ENCODE measurements at regions of chr4 and their contacts with region 1.

Region 1: DNA sequence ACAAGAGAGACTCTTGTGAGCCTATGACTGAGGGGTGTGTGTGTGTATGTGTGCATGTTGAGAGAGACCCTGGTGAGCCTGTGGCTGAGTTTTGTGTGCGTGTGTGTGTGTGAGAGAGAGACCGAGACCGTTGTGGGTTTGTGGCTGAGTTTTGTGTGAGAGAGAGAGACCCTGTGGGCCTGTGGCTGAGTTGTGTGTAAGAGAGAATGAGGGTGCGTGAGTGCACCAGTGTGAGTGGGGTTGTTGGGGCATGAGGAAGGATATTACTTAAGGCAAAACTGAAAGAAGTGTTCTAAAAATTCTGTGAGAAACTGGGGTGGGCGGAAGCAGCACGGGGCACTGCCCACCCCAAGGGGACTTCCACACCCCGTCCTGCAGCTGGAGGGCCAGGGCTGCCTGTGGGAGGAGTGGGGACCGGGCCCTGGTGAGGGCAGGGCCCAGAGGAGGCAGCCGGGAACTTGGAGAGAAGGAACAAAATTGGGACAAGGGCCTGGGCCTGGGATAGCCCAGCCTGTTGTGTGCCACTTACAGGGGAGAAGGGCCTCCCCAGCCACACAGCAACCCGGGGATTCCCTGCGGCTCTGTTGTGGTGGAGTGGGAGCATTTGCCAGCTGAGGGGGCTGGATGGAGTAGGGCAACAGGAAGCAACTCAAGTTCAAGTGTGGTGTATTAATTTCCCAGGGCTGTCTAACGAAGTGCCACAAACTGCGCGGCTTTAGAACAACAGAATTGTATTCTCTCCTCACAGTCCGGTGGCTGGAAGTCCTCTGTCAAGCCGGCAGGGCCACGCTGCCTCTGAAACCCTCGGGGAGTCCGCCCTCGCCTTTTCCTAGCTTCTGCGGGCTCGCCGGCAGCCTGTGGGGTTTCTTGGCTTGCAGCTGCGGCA is 22.1 kb downstream of the TMEM131L start:
- DNase-seq: peak in 1 of 2 donors; percentile 70
- H3K4me3 ChIP-seq: peak overlapping the region; percentile 14 to 47
- H3K27ac ChIP-seq: peak overlapping the region; percentile 88 to 90
- H3K4me1 ChIP-seq: peaks cover 21 to 34% of the 10 kb centered on the region in 2 donors
- H3K27me3 ChIP-seq: no peaks in the 10 kb centered on the region
- CTCF ChIP-seq: no peak

Region 2: GRCh38 chr4:153521999-153522801 is 34.0 kb after region 1 on chr4:
- intact Hi-C with region 1: loop called (anchors 5 kb)
- DNase-seq: no peak
- H3K4me3 ChIP-seq: no peak overlapping the region
- H3K27ac ChIP-seq: peak overlapping the region; percentile 47 to 55
- H3K4me1 ChIP-seq: peaks cover 3 to 30% of the 10 kb centered on the region in 2 donors
- H3K27me3 ChIP-seq: no peaks in the 10 kb centered on the region
- CTCF ChIP-seq: no peak

Measured in ascending aorta (tissue), 2 donors.